Naive thymus-derived CD4-positive, alpha-beta T cell (primary cell): ENCODE measurements at regions of chr5 and their contacts with region 1.

Region 1: DNA sequence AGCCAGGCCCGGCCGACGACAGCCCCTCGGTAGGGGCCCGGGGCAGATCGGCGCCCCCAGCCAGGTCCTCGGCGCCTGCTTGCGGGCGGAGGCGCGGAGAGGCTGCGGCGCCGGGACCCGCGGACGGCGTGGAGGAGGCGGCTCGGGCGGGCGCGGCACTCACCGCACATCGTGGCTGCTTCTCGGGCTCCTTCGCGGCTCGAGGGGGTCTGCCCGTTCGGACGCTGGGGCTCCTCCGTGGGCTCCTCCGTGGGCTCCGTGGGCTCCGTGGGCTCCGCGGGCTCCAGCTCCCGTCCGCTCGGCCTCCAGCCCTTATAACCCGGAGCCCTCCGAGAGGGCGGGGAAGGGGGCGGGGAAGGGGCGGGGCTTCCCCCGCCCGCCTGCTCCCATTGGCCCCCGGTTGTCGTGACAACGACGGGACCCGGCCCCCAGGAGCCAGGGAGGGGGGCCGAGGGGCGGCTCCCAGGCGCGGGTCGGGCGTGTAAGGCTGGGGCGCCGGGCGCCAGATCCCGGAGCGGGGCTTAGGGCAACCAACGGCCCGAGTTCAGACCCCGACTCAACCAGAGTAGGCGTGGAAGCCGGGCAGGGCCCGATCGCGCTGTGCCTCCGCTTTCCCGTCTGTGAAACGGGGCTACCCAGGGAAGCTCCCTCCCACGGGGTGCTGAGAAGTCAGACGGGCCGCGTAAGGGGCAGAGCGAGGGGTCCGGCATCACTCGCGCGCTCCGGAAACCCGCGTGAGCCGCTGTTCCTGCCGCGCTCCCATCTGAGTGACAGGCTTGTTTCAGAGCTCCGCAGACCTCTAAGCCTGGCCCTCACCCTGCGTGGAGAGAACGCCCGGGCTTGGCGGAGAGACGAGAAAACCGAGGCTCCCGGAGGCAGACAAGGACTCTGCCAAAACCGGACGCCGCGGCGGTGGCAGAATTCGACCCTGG is at the start of gene GFPT2:
- DNase-seq: peak; percentile 52 to 75 (median 65)
- ATAC-seq: peak; percentile 95
- H3K4me3 ChIP-seq: peak within 1 kb of the TSS; percentile 75
- H3K4me3 Mint-ChIP-seq: peak within 1 kb of the TSS; percentile 66 to 84 (median 77)
- H3K27ac ChIP-seq: no peak within 1 kb of the TSS
- H3K27ac Mint-ChIP-seq: no peak within 1 kb of the TSS
- H3K4me1 ChIP-seq: peaks cover 5% of the 10 kb centered on the region in 2 donors
- H3K4me1 Mint-ChIP-seq: peaks cover 0 to 12% (median 6%) of the 10 kb centered on the region in 7 donors
- H3K27me3 ChIP-seq: peaks cover 0 to 13% of the 10 kb centered on the region in 2 donors
- H3K27me3 Mint-ChIP-seq: peaks cover 33 to 62% (median 45%) of the 10 kb centered on the region in 5 donors
- total RNA-seq, gene GFPT2: 0.16 to 0.81 TPM in 2 of 5 experiments, not detected in the others

Region 2: DNA sequence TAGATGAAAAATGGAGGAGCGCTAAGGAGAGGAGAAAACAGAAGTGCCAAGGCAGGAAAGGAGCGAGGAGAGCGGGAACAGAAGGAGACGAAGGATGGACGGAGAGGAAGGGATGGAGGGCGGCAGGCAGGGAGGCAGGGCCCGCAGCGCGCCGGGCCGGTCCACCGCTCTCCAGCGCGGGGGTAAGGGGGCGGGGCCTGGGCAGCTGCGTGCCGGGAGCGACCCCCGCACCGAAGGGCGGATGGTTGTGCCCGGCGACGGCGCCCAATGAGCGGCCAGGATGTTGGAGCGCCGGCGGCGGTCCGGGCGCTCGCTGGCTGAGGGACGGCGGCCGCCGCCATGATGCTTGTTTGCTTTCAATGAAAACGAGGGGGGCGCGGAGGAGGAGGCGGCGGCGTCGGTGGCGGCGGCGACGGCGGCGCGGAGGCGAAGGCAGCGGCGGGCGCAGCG is 140.8 kb after region 1 on chr5 and contains the start of gene CNOT6:
- CTCF ChIA-PET with region 1: no interaction called
- POLR2A ChIA-PET with region 1: no interaction called
- intact Hi-C with region 1: loop called (anchors 2 to 5 kb)
- DNase-seq: peak; percentile 91 to 98 (median 95)
- ATAC-seq: peak; percentile 98
- H3K4me3 ChIP-seq: peak within 1 kb of the TSS; percentile 83
- H3K4me3 Mint-ChIP-seq: peak within 1 kb of the TSS; percentile 85 to 99 (median 96)
- H3K27ac ChIP-seq: peak within 1 kb of the TSS; percentile 98
- H3K27ac Mint-ChIP-seq: peak within 1 kb of the TSS; percentile 84 to 98 (median 95)
- H3K4me1 ChIP-seq: peaks cover 10 to 27% of the 10 kb centered on the region in 2 donors
- H3K4me1 Mint-ChIP-seq: peaks cover 29 to 42% (median 35%) of the 10 kb centered on the region in 7 donors
- H3K27me3 ChIP-seq: no peaks in the 10 kb centered on the region
- H3K27me3 Mint-ChIP-seq: no peaks in the 10 kb centered on the region
- total RNA-seq, gene CNOT6: 22.8 to 41.9 (median 30.0) TPM